Activated T-helper 2 cell treated with anti-CD3 and anti-CD28 coated beads, Interferon-gamma antibody, Interleukin-2, Interleukin-4, amounts not matched to agents 10 μg/mL and 5 μg/mL and 100 μg/mL, durations not matched to agents 14 hours and 24 hours and 36 hours (primary cell): ENCODE measurements at regions of chr3 and their contacts with region 1.

Region 1: GRCh38 chr3:101170062-101170771 is 150.2 kb downstream of the IMPG2 start:
- DNase-seq: no peak
- H3K4me3 Mint-ChIP-seq: no peak overlapping the region
- H3K27ac Mint-ChIP-seq: peak overlapping the region; percentile 96
- H3K4me1 Mint-ChIP-seq: peaks cover 38% of the 10 kb centered on the region
- H3K27me3 Mint-ChIP-seq: no peaks in the 10 kb centered on the region

Region 2: GRCh38 chr3:100665230-100665629 is 505.0 kb before region 1 on chr3:
- intact Hi-C with region 1: loop called (anchors 1 kb)
- DNase-seq: peak; percentile 50
- H3K4me3 Mint-ChIP-seq: peak overlapping the region; percentile 50
- H3K27ac Mint-ChIP-seq: peak overlapping the region; percentile 57
- H3K4me1 Mint-ChIP-seq: peaks cover 32% of the 10 kb centered on the region
- H3K27me3 Mint-ChIP-seq: peaks cover 3% of the 10 kb centered on the region

Region 3: DNA sequence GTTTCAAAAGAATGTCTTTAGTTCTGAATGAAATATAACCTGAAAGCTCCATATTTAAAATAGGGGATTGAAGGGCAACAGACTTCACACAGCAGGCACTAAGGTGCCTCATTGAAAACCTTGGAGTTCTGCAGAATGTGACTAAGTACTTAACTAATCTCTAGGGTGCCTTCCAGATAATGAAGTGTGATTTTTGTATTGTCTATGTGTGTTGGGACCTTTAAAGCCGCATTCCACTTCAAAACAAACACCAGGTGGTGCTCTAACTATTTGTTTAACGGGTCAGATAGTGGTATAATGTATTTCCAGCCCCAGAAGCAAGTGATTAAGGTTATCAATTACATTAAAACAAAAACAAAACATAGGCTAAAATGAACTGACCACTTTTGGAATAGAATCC is 432.9 kb before region 1 on chr3:
- intact Hi-C with region 1: loop called (anchors 1 kb)
- DNase-seq: no peak
- H3K4me3 Mint-ChIP-seq: no peak overlapping the region
- H3K27ac Mint-ChIP-seq: peak overlapping the region; percentile 33
- H3K4me1 Mint-ChIP-seq: peaks cover 41% of the 10 kb centered on the region
- H3K27me3 Mint-ChIP-seq: no peaks in the 10 kb centered on the region

Region 4: DNA sequence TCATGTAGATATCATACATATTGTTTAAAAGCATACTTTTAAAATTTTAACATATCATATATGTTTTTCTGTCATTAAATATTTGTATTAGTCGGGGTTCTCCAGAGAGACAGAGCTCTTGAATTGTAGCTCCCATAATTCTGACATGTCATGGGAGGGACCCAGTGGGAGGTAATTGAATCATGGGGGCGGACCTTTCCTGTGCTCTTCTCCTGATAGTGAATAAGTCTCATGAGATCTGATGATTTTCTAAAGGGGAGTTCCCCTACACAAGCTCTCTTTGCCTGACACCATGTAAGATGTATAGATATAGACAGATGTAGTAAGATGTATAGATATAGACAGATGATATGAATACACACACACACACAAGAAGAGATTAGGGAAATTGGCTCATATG is 15.8 kb before region 1 on chr3:
- intact Hi-C with region 1: loop called (anchors 1 kb)
- DNase-seq: no peak
- H3K4me3 Mint-ChIP-seq: no peak overlapping the region
- H3K27ac Mint-ChIP-seq: no peak overlapping the region
- H3K4me1 Mint-ChIP-seq: peaks cover 6% of the 10 kb centered on the region
- H3K27me3 Mint-ChIP-seq: peaks cover 3% of the 10 kb centered on the region

Region 5: GRCh38 chr3:101243285-101244211 is 73.3 kb after region 1 on chr3:
- intact Hi-C with region 1: loop called (anchors 1 kb)
- DNase-seq: no peak
- H3K4me3 Mint-ChIP-seq: no peak overlapping the region
- H3K27ac Mint-ChIP-seq: peak overlapping the region; percentile 59
- H3K4me1 Mint-ChIP-seq: peaks cover 16% of the 10 kb centered on the region
- H3K27me3 Mint-ChIP-seq: no peaks in the 10 kb centered on the region

Region 6: DNA sequence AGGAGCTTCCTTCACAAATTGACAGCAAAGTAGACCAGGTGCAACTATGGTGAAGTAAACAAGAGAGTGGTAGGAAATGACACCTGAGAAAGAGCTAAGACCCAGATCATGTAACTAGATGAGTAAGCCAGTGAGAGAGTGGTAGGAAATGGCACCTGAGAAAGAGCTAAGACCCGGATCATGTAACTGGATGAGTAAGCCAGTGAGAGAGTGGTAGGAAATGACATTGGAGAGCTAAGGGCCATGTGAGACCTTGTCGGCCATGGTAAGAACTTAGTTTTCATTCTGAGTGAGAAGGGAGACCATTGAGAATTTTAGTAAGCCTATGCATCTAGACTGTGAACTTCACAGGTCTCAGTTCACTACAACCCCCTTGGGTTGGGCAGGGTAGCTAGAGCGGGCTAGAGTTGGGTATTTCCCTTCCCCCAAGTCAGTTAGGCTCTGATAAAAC is 348.2 kb after region 1 on chr3:
- intact Hi-C with region 1: loop called (anchors 1 kb)
- DNase-seq: peak; percentile 55
- H3K4me3 Mint-ChIP-seq: peak overlapping the region; percentile 53
- H3K27ac Mint-ChIP-seq: peak overlapping the region; percentile 85
- H3K4me1 Mint-ChIP-seq: peaks cover 39% of the 10 kb centered on the region
- H3K27me3 Mint-ChIP-seq: no peaks in the 10 kb centered on the region

Region 7: DNA sequence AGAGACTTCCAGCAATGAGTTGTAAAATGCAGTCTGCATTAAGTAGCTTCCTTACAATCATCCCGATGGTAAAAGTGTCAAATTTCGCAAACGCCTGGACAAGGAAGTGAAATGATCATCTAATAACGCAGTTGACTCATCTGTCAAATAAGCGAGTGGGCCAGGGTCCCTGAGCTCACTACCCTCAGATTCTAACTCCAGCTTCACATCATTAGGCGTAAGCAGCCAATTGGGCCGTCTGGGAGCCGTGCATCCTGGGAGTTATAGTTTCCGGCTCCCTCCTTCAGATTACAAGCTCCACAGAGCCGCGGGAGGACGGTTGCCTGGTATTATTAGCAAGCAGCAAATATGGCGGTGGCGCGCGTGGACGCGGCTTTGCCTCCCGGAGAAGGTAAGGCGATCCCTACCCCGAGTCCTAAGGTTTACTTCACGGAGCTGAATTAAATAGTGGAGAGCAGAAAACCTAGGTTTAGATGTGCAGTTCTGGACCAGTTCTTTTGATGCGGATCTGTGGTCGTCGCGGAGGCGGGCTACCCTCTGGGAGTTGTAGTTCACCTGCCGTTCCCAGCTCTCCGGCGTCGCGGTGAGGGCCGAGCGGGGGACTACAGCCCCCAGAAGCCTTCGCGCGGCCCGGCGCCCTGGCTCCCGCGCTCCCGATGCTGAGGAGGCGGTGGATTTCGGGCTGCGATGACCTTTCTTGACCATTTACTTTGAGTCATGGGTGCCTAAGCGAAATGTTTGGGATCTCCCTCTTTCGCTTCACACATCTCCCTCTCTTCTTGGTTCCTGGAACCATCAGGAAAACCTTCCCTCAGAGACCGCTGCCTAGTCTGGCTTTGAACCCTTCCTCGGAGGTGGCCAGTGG is 554.3 kb after region 1 on chr3 and contains the start of gene CEP97:
- intact Hi-C with region 1: loop called (anchors 5 kb)
- DNase-seq: peak; percentile 85
- H3K4me3 Mint-ChIP-seq: peak within 1 kb of the TSS; percentile 96
- H3K27ac Mint-ChIP-seq: peak within 1 kb of the TSS; percentile 98
- H3K4me1 Mint-ChIP-seq: peaks cover 40% of the 10 kb centered on the region
- H3K27me3 Mint-ChIP-seq: no peaks in the 10 kb centered on the region
- total RNA-seq, gene CEP97: 26.0 and 26.1 TPM in 2 replicates